ENCODE measurements at regions of chr14 and their contacts with region 1.

Region 1: DNA sequence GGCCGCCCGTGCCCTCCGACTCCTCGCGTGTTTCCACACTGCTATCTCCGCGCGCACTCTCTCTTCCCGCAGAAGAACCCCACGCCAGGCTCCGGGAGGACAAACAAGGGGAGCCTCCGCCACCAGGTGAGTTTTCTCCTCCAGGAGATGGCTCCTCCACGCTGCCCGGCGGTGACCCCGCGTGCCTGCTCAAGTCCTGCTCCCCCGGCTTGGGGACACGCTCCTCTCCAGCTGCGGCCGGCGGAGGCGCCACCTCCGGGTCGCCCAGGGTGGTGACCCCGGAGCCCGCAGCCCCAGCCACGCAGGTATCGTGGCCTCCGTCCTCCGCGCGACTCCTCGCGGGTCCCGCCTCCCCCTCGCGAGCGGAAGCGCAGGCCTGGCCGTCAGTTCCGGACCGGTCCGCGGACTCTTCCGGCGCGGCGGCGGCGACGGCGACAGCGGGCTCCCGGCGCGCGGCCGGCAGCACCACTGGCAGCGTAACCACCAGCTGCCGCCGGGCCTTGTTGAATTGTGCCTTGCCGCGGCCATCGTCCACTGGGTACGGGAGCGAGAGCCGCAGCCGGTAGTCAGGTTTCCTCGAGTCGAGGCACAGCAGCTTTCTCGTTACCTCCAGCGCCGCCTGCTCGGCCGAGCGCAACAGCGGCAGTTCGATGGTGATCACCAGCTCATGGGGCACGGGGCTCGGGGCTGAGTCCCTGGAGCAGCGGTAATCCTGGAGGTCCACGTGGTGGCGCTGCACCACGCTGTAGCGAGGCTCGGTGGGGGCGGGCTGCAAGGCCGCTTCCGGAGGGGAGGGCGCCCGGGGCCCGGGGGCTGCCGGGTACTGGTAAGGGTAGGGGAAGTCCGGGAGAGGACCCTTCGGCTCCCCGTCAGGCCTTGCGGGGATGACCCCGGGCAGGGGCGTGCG is 1.2 kb downstream of the DNAAF2 start:
- DNase-seq: peak; percentile 93 to 96 (median 94)
- ATAC-seq: peak; percentile 91 to 96 (median 94)
- H3K4me3 ChIP-seq: peak overlapping the region; percentile 68 to 98 (median 95)
- H3K27ac ChIP-seq: peak overlapping the region; percentile 79 to 100 (median 98)
- H3K4me1 ChIP-seq: peaks cover 0 to 61% (median 36%) of the 10 kb centered on the region in 12 donors
- H3K27me3 ChIP-seq: no peaks in the 10 kb centered on the region
- CTCF ChIP-seq: peak; percentile 76 to 96 (median 87)
- POLR2A ChIP-seq: peak in 1 of 2 donors; percentile 66

Region 2: GRCh38 chr14:49451938-49452337 is 182.0 kb before region 1 on chr14:
- intact Hi-C with region 1: no loop called
- DNase-seq: no peak
- ATAC-seq: no peak
- H3K4me3 ChIP-seq: no peak overlapping the region
- H3K27ac ChIP-seq: no peak overlapping the region
- H3K4me1 ChIP-seq: no peaks in the 10 kb centered on the region
- H3K27me3 ChIP-seq: peaks cover 0 to 6% (median 0%) of the 10 kb centered on the region in 9 donors
- CTCF ChIP-seq: no peak
- POLR2A ChIP-seq: no peak

Region 3: GRCh38 chr14:49692811-49693734 is 59.2 kb after region 1 on chr14 and contains the start of gene KLHDC1:
- intact Hi-C with region 1: loop called in 6 of 10 experiments (anchors 2 to 5 kb)
- DNase-seq: peak; percentile 91 to 95 (median 93)
- ATAC-seq: peak; percentile 87 to 96 (median 94)
- H3K4me3 ChIP-seq: peak within 1 kb of the TSS; percentile 55 to 96 (median 78)
- H3K27ac ChIP-seq: peak within 1 kb of the TSS; percentile 87 to 97 (median 94)
- H3K4me1 ChIP-seq: peaks cover 0 to 24% (median 11%) of the 10 kb centered on the region in 12 donors
- H3K27me3 ChIP-seq: no peaks in the 10 kb centered on the region
- CTCF ChIP-seq: no peak
- POLR2A ChIP-seq: peak in 1 of 2 donors; percentile 84
- total RNA-seq, gene KLHDC1: 3.0 to 9.8 (median 7.4) TPM

Region 4: DNA sequence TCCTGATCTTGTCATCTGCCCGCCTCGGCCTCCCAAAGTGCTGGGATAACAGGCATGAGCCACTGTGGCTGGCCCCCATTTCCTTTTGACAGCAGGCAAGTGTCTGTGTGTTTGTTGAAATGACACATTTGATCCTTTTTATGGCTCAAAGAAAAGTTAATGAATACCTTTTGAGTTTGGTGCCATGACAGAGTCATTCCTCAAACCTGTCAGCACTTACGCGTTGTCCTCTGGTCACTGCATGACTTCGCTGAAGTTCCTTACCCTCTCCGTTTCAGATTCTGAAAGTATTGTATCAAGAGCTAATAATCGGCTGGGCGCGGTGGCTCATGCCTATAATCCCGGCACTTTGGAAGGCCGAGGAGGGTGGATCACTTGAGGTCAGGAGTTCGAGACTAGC is 186.3 kb after region 1 on chr14:
- intact Hi-C with region 1: loop called in 3 of 10 experiments (anchors 10 kb)
- DNase-seq: no peak
- ATAC-seq: no peak
- H3K4me3 ChIP-seq: no peak overlapping the region
- H3K27ac ChIP-seq: no peak overlapping the region
- H3K4me1 ChIP-seq: no peaks in the 10 kb centered on the region
- H3K27me3 ChIP-seq: no peaks in the 10 kb centered on the region
- CTCF ChIP-seq: no peak
- POLR2A ChIP-seq: no peak

Region 5: GRCh38 chr14:49852301-49853157 is 218.6 kb after region 1 on chr14 and contains the start of gene NEMF:
- intact Hi-C with region 1: loop called in 4 of 10 experiments (anchors 2 to 10 kb)
- DNase-seq: peak; percentile 87 to 94 (median 91)
- ATAC-seq: peak; percentile 91 to 92 (median 92)
- H3K4me3 ChIP-seq: peak within 1 kb of the TSS; percentile 55 to 97 (median 79)
- H3K27ac ChIP-seq: peak within 1 kb of the TSS; percentile 9 to 98 (median 90)
- H3K4me1 ChIP-seq: peaks cover 0 to 46% (median 17%) of the 10 kb centered on the region in 12 donors
- H3K27me3 ChIP-seq: no peaks in the 10 kb centered on the region
- CTCF ChIP-seq: peak; percentile 64 to 96 (median 80)
- POLR2A ChIP-seq: peak in 1 of 2 donors; percentile 43
- total RNA-seq, gene NEMF: 26.7 to 69.7 (median 52.8) TPM

Region 6: GRCh38 chr14:50116181-50116956 is 482.5 kb after region 1 on chr14 and contains the start of gene VCPKMT:
- intact Hi-C with region 1: loop called in 1 of 10 experiments (anchors 2 kb)
- DNase-seq: peak; percentile 94 to 97 (median 95)
- ATAC-seq: peak; percentile 97 to 100 (median 100)
- H3K4me3 ChIP-seq: peak within 1 kb of the TSS; percentile 68 to 87 (median 72)
- H3K27ac ChIP-seq: peak within 1 kb of the TSS; percentile 66 to 90 (median 82)
- H3K4me1 ChIP-seq: peaks cover 0 to 22% (median 14%) of the 10 kb centered on the region in 12 donors
- H3K27me3 ChIP-seq: no peaks in the 10 kb centered on the region
- CTCF ChIP-seq: peak in 1 of 12 donors; percentile 8
- POLR2A ChIP-seq: peak; percentile 11 to 89
- total RNA-seq, gene VCPKMT: 0.95 to 4.9 (median 2.9) TPM

Region 7: GRCh38 chr14:50210074-50210473 is 576.2 kb after region 1 on chr14:
- intact Hi-C with region 1: no loop called
- DNase-seq: no peak
- ATAC-seq: peak in 1 of 4 donors; percentile 42
- H3K4me3 ChIP-seq: no peak overlapping the region
- H3K27ac ChIP-seq: no peak overlapping the region
- H3K4me1 ChIP-seq: peaks cover 0 to 30% (median 9%) of the 10 kb centered on the region in 12 donors
- H3K27me3 ChIP-seq: no peaks in the 10 kb centered on the region
- CTCF ChIP-seq: no peak
- POLR2A ChIP-seq: no peak